HCT116 (cell line): ENCODE measurements at regions of chr10 and their contacts with region 1.

Region 1: GRCh38 chr10:93437088-93437945 is 44.8 kb downstream of the MYOF start:
- DNase-seq: peak; percentile 86
- ATAC-seq: peak; percentile 79
- H3K4me3 ChIP-seq: peak overlapping the region; percentile 12 to 35
- H3K27ac ChIP-seq: peak overlapping the region; percentile 100
- H3K4me1 ChIP-seq: peaks cover 88 to 96% of the 10 kb centered on the region in 2 experiments
- H3K27me3 ChIP-seq: no peaks in the 10 kb centered on the region
- CTCF ChIP-seq: no peak
- POLR2A ChIP-seq: no peak
- RAD21 ChIP-seq: peak; percentile 22; the same call in 1 of the 2 replicates

Region 2: DNA sequence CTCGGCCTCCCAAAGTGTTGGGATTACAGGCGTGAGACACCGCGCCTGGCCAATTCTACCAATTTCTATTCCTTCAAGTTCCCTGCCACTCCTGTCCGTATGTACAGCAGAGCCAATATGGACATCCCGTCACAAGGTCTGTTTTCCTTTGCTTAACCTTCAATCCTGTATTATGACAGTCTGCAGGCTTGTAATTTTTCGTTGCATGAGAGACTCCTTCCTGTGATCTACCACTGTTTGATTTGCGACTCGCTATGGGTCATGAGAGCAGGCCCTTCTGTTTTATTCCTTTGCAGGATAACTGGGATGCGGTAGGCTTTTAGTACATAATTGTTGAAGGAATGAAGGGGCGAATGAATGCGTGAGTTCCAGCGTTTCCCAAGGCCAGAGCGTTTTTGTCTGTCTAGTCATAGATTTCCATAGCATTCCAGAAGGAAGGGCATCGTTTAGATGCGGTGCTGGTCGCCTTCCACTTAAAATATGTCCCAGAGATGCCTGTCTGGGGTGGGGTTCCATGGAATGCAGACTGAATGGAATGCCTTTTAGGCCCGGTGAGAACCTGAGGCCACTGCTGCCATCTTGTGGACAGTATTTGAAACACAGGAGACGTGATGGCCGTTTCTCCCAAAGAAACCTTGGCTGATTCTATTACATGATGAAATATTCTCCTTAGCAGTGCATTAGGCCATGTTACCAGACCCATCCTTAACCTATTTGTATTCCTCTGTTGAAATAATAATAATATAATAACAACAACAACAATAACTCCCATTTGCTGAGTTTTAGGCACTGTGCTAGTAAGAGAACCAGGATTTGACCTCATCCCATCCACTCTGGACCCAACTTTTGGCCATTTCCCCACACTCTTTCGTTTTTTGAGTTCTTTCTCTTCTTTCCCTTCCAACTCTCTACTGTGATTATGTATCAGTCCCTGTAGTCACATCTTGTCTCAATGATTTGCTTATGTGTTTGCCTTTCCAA is 148.4 kb before region 1 on chr10:
- CTCF ChIA-PET with region 1: no interaction called
- POLR2A ChIA-PET with region 1: no interaction called
- RAD21 ChIA-PET with region 1: no interaction called
- intact Hi-C with region 1: no loop called
- DNase-seq: peak; percentile 78
- ATAC-seq: peak; percentile 96
- H3K4me3 ChIP-seq: peak overlapping the region in 1 of 2 experiments; percentile 29; a peak in 1 of 4 replicates
- H3K27ac ChIP-seq: peak overlapping the region; percentile 43; the same call in 1 of the 2 replicates
- H3K4me1 ChIP-seq: peaks cover 5 to 23% of the 10 kb centered on the region in 2 experiments
- H3K27me3 ChIP-seq: no peaks in the 10 kb centered on the region
- CTCF ChIP-seq: peak; percentile 67 to 85 (median 75)
- POLR2A ChIP-seq: no peak
- RAD21 ChIP-seq: peak; percentile 92

Region 3: DNA sequence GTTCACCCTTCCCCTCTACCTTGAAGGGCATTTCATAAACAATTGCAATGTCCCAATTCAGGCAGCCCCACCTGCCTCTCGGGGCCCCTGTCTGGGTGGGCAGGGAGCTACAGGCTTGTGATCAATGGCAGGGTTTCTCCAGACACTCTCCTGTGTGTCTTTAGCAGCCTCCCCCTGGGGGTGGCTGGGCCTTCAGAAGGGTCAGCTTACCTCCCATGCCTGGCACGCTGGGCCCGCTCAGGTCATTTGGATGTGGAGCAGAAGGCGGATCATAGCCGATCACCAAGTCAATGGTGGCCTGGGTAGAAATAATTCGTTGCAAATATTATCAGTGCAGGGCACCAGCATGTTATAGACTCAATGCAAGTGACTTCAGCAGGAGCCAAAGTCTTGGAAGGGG is 11.5 kb before region 1 on chr10:
- CTCF ChIA-PET with region 1: interaction called, 3 read pairs
- POLR2A ChIA-PET with region 1: interaction called, 12 read pairs
- RAD21 ChIA-PET with region 1: no interaction called
- intact Hi-C with region 1: no loop called
- DNase-seq: no peak
- ATAC-seq: peak; percentile 11
- H3K4me3 ChIP-seq: no peak overlapping the region
- H3K27ac ChIP-seq: peak overlapping the region; percentile 82
- H3K4me1 ChIP-seq: peaks cover 70 to 87% of the 10 kb centered on the region in 2 experiments
- H3K27me3 ChIP-seq: no peaks in the 10 kb centered on the region
- CTCF ChIP-seq: no peak
- POLR2A ChIP-seq: no peak
- RAD21 ChIP-seq: no peak

Region 4: GRCh38 chr10:93458821-93459257 is 21.5 kb after region 1 on chr10:
- CTCF ChIA-PET with region 1: interaction called, 5 read pairs
- POLR2A ChIA-PET with region 1: interaction called, 15 read pairs
- RAD21 ChIA-PET with region 1: no interaction called
- intact Hi-C with region 1: no loop called
- DNase-seq: peak; percentile 97
- ATAC-seq: peak; percentile 81
- H3K4me3 ChIP-seq: peak overlapping the region; percentile 18 to 32
- H3K27ac ChIP-seq: peak overlapping the region; percentile 97
- H3K4me1 ChIP-seq: peaks cover 83 to 90% of the 10 kb centered on the region in 2 experiments
- H3K27me3 ChIP-seq: no peaks in the 10 kb centered on the region
- CTCF ChIP-seq: no peak
- POLR2A ChIP-seq: no peak
- RAD21 ChIP-seq: no peak

Region 5: DNA sequence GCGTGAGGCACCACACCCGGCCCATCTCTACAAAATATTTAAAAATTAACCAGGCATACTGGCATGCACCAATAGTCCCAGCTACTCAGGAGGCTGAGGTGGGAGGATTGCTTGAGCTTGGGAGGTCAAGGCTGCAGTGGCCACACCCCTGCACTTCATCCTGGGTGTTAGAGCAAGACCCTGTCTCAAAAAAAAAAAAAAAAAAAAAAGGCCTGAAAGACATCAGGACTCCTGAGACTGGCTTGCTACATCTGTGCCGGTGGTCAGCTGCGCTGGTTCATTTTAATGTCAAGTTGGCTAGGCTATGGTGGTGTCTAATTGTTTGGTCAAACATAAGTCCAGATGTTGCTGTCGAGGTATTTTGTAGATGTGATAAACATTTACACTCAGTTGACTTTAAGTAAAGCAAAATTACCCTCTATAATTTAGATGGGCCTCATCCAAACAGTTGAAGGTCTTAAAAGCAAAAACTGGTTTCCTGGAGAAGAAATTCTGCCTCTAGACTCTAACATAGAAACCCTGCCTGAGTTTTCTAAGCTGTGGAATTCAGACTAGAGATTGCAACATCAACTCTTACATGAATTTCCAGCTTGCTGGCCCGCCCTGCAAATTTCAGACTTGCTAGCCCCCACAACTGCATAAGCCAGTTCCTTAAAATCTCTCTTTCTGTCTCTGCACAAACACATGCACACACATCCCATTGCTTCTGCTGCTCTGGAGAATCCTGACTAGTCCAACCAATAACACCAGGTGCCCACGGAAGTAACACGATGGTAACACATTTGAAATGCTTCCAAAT is 26.6 kb after region 1 on chr10:
- CTCF ChIA-PET with region 1: interaction called, 5 read pairs
- POLR2A ChIA-PET with region 1: interaction called, 22 read pairs
- RAD21 ChIA-PET with region 1: interaction called, 4 to 6 read pairs
- intact Hi-C with region 1: no loop called
- DNase-seq: no peak
- ATAC-seq: no peak
- H3K4me3 ChIP-seq: no peak overlapping the region
- H3K27ac ChIP-seq: peak overlapping the region; percentile 98
- H3K4me1 ChIP-seq: peaks cover 88 to 93% of the 10 kb centered on the region in 2 experiments
- H3K27me3 ChIP-seq: no peaks in the 10 kb centered on the region
- CTCF ChIP-seq: no peak
- POLR2A ChIP-seq: no peak
- RAD21 ChIP-seq: no peak